Right lobe of liver (tissue), 6 donors: ENCODE measurements at regions of chr19 and their contacts with region 1.

Region 1: DNA sequence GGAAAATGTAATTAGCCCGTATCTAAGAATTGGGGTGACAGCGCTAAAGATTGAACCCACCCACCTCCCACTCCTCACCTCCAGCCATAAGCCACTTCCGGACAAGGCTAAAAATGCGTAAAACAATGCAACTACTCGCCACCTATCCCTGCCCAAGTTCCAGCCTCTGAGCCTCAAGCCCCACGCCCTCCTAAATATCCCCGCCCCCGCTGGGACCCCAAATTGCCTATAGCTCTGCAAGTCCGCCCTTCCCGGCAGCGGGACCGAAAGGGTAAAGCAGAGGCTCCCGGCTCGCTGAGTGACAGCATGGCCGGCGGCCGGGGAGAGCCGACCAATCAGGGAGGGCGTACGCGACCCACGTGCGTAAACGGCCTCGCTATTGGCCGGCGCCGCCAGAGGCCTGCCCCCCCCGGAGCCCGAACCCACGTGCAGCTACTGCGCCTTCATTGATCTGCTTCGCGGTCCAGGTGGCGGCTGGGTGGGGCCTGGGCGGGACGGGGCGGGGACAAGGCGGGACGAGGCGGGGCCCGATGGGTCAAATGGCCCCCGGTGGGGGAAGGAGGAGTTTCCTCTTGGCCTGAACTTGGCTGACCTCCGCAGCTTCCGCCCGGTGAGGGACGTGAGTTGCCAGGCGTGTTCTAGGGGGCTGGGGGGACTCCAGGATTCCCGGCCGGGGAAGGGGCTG is at the start of gene TLE6:
- DNase-seq: peak; percentile 98
- ATAC-seq: peak; percentile 88 to 95 (median 94)
- H3K4me3 ChIP-seq: peak within 1 kb of the TSS; percentile 31 to 50 (median 49)
- H3K27ac ChIP-seq: peak within 1 kb of the TSS in 2 of 3 donors; percentile 16 to 37
- H3K4me1 ChIP-seq: peaks cover 0 to 30% (median 12%) of the 10 kb centered on the region in 4 donors
- H3K27me3 ChIP-seq: no peaks in the 10 kb centered on the region
- CTCF ChIP-seq: no peak
- POLR2A ChIP-seq: no peak
- total RNA-seq, gene TLE6: 2.3 to 8.9 (median 4.6) TPM

Region 2: GRCh38 chr19:3035542-3036118 is 58.5 kb after region 1 on chr19:
- intact Hi-C with region 1: loop called in 1 of 2 experiments (anchors 10 kb)
- DNase-seq: peak; percentile 96 to 99 (median 98)
- ATAC-seq: peak; percentile 81 to 92 (median 86)
- H3K4me3 ChIP-seq: peak overlapping the region; percentile 52 to 64 (median 56)
- H3K27ac ChIP-seq: peak overlapping the region; percentile 73 to 89 (median 80)
- H3K4me1 ChIP-seq: peaks cover 0 to 26% (median 11%) of the 10 kb centered on the region in 4 donors
- H3K27me3 ChIP-seq: no peaks in the 10 kb centered on the region
- CTCF ChIP-seq: no peak
- POLR2A ChIP-seq: peak; percentile 38